Left cardiac atrium (tissue), 4 donors: ENCODE measurements at regions of chr12 and their contacts with region 1.

Region 1: GRCh38 chr12:27305673-27306456 is 26.8 kb upstream of the BMAL2 start:
- DNase-seq: no peak
- ATAC-seq: peak; percentile 25 to 34

Region 2: GRCh38 chr12:27034607-27035293 is 271.1 kb before region 1 on chr12:
- intact Hi-C with region 1: loop called (anchors 5 to 10 kb)
- DNase-seq: no peak
- ATAC-seq: peak in 1 of 2 donors; percentile 34

Region 3: DNA sequence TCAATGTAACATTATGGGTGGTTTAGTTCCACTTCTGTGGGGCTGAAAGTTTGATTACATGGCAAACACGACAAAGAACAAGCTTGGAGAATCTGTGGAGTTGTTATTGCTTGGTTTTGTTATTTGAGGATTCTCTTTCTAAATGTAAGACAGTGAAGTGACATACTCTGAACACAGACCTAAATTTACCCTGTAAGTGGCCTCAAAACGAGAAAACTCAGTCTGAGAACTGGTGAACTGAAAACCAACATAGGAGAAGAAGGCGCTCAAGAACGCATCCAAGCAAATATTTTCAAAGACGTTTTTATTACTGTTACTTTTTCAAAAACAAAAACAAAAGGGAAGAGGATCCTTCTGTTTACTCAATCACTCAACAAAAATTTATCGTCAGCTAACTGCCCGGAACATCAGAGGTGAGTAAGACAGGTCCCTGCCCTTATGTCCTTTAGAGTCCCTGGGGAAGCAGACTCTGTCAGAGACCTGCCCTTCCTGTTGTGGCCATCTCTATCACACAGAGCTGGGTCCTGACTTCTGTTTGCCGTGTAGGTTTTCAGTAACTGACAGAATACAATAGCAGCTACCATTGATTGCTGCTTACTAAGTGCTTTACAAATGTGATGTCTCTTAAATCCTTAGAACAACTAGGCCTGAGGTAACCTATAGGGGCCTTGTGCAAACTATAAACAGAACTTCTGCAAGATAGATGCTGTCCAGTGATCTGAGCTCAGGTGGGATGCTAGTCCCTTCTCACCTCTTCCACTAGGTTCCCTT is 144.2 kb before region 1 on chr12:
- intact Hi-C with region 1: no loop called
- DNase-seq: no peak
- ATAC-seq: no peak

Region 4: DNA sequence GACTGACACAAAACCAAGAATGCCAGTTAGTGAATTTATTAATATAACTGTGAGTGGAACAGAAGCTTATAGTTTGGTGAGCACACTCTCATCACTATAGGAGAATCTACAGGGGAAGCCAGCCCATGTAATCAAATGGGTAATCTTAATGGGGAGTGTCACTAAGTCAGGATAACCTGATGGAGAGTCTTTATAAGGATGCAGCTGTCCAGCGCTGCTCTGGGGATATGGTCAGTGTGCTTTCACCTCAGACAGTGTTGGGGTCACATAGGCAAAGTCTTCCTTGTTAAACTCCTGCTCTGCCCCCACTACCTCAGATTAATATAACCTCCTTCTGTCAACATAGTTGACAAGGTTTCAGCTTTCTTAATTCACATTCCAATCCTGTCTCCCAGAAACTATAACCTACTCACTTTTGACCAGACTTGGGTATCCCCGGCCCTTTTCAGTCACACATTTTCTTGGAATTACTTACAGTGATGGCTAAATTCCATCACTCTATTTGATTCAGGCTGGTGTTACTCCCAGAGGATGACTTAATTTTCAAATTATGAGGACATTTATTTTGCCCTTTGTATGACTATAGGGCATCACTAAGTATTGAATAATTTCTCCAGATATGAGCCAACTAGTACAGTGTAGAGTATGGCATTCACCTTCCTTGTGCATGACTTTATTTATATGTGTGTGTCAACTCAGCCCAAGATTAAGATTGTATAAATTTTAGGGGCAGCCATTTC is 48.6 kb before region 1 on chr12:
- intact Hi-C with region 1: loop called in 1 of 2 experiments (anchors 10 kb)
- DNase-seq: no peak
- ATAC-seq: peak; percentile 16 to 79